ENCODE measurements at regions of chr19 and their contacts with region 1.

Region 1: GRCh38 chr19:15675560-15675959 is 2.7 kb downstream of the CYP4F12 start:
- DNase-seq: no peak
- ATAC-seq: no peak
- H3K4me3 ChIP-seq: no peak overlapping the region
- H3K27ac ChIP-seq: no peak overlapping the region
- H3K4me1 ChIP-seq: peaks cover 0 to 7% of the 10 kb centered on the region in 2 experiments; a peak in 2 of 5 replicates
- H3K27me3 ChIP-seq: no peaks in the 10 kb centered on the region; a peak in 1 of 5 replicates
- CTCF ChIP-seq: no peak
- EP300 ChIP-seq: no peak
- POLR2A ChIP-seq: no peak
- RAD21 ChIP-seq: no peak

Region 2: DNA sequence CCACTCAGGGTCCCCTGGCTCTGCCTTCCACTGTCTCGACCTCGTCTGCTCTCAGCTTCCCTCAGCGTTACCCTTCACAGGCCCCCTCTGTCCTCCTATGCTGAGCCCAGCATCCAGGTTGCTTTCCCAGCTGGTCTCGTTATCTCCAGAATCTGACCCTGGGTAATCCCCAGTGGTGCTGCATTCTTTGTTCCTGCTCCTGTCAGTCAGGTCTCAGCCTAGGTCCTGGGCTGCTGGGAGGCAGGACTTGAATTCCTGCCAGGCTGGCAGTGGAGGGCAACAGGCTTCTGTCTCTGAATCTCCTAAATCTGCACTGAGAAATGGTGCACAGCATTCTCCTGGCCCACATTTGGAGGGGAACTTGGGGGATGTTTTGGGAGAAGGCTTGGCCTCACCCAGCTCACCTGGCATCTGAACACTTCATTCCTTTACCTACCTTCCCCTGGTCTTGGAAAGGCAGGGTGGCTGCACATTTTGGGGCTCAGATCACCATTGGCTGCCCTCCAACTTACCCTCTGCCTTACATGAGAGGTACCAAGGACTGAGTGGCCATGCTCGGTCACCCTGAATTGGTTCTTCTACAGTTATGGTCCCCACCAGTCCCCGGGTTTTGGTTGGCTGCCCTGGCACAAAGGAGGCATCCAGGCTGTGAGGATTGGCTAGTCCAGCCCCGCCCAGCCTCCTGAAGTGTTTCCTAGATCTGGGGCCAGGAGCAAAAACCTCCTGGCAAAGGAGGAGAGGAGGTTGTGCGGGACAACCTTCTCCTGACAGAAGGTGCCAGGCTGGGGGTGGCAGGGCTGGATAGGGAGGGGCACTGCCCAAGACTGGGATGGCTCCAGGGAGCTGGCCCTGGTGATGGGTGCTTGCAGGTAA is 60.8 kb before region 1 on chr19 and contains the start of gene CYP4F8:
- CTCF ChIA-PET with region 1: no interaction called
- POLR2A ChIA-PET with region 1: no interaction called
- in situ Hi-C with region 1: no loop called
- intact Hi-C with region 1: no loop called
- DNase-seq: no peak
- ATAC-seq: no peak
- H3K4me3 ChIP-seq: no peak within 1 kb of the TSS
- H3K27ac ChIP-seq: no peak within 1 kb of the TSS
- H3K4me1 ChIP-seq: peaks cover 0 to under 1% of the 10 kb centered on the region in 2 experiments; a peak in 1 of 5 replicates
- H3K27me3 ChIP-seq: peaks cover 0 to 6% of the 10 kb centered on the region in 2 experiments; a peak in 2 of 5 replicates
- CTCF ChIP-seq: no peak
- EP300 ChIP-seq: no peak
- POLR2A ChIP-seq: no peak
- RAD21 ChIP-seq: no peak
- polyA plus RNA-seq, gene CYP4F8: not detected

Region 3: GRCh38 chr19:15779756-15780476 is 104.4 kb after region 1 on chr19:
- CTCF ChIA-PET with region 1: no interaction called
- POLR2A ChIA-PET with region 1: no interaction called
- in situ Hi-C with region 1: loop called (anchors 5 kb)
- intact Hi-C with region 1: no loop called
- DNase-seq: no peak
- ATAC-seq: no peak
- H3K4me3 ChIP-seq: no peak overlapping the region
- H3K27ac ChIP-seq: no peak overlapping the region
- H3K4me1 ChIP-seq: no peaks in the 10 kb centered on the region; a peak in 1 of 5 replicates
- H3K27me3 ChIP-seq: no peaks in the 10 kb centered on the region; a peak in 1 of 5 replicates
- CTCF ChIP-seq: no peak
- EP300 ChIP-seq: no peak
- POLR2A ChIP-seq: no peak
- RAD21 ChIP-seq: no peak